Pancreas (tissue), 10 donors: ENCODE measurements at regions of chr2 and their contacts with region 1.

Region 1: DNA sequence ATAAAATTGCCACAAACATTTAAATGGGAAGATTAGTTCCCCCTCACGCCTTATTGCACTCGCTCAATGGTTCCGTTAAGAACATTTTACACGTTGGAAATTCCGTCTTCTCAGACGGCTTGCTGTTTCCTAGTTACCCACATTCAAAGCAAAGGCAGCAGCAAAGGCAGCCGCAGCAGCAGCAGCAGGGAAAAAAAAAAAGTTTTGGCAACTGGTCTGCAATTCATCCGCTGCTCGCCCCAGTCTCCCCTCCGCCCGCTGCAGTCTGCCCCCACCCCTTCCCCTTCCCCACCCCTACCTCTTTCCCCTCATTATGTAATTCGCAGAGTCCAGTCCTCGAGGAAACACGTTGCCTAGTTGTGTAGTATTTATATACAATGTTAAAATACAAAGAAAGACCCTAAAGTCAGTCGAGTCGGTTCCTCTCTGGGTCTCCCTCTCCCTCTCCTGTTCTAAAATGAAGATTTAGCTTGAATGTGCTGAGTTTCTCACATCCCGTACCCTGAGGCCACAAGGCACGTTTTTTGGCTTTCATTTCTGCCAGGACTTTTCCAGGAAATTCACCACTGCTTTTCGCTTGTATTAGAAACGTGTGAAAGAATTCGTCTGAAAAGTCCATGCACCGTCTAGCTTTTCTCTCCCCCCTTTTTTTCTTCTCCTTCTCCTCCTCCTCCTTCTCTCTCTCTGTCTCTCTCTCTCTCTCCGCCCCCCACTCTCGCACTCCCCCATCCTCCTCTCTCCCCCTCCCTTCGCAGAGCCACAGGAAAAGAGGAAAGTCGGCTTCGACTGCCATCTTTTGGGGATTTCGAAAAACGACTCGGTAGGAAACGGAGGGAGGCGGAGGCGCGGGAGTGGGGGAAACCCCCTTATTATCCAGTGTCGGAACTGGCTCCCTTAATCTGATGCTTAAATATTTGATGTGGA is 140.0 kb downstream of the MEIS1 start:
- DNase-seq: peak; percentile 67 to 84 (median 78)
- ATAC-seq: peak; percentile 38 to 56 (median 49)
- H3K4me3 ChIP-seq: peak overlapping the region; percentile 45 to 64 (median 52)
- H3K27ac ChIP-seq: peak overlapping the region; percentile 85 to 98 (median 94)
- H3K4me1 ChIP-seq: peaks cover 0 to 27% (median 18%) of the 10 kb centered on the region in 3 donors
- H3K27me3 ChIP-seq: no peaks in the 10 kb centered on the region
- CTCF ChIP-seq: peak in 1 of 4 donors; percentile 17

Region 2: DNA sequence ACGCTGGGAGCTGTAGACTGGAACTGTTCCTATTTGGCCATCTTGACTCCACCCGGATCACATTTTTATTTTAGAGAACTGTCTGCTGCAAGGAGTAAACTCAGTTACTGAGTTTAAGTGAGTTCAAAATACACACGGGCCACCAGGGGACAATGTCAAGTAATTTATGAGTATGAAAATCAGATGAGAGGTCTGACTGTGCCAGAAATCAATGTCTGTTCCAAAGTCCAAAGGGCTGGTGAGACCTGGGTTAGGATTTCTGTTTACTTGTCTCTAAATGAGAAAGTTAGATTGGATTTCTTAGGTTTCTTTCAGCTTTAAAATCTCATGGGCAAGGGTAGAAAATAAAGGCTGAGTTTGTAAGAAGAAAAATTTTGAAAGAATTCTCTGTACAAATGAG is 605.8 kb before region 1 on chr2:
- intact Hi-C with region 1: no loop called
- DNase-seq: peak in 3 of 6 donors; percentile 14 to 23 (median 19)
- ATAC-seq: peak; percentile 75 to 95 (median 91)
- H3K4me3 ChIP-seq: no peak overlapping the region
- H3K27ac ChIP-seq: no peak overlapping the region
- H3K4me1 ChIP-seq: peaks cover 5 to 10% (median 7%) of the 10 kb centered on the region in 3 donors
- H3K27me3 ChIP-seq: no peaks in the 10 kb centered on the region
- CTCF ChIP-seq: no peak

Region 3: GRCh38 chr2:66434679-66435548 is 140.0 kb before region 1 on chr2 and contains the start of gene MEIS1:
- intact Hi-C with region 1: loop called (anchors 2 to 10 kb)
- DNase-seq: peak; percentile 88 to 96 (median 96)
- ATAC-seq: peak; percentile 73 to 83 (median 78)
- H3K4me3 ChIP-seq: peak within 1 kb of the TSS; percentile 43 to 74 (median 66)
- H3K27ac ChIP-seq: peak within 1 kb of the TSS; percentile 87 to 99 (median 92)
- H3K4me1 ChIP-seq: peaks cover 0 to 5% (median 0%) of the 10 kb centered on the region in 3 donors
- H3K27me3 ChIP-seq: no peaks in the 10 kb centered on the region
- CTCF ChIP-seq: no peak
- total RNA-seq, gene MEIS1: 48.6 to 129 (median 60.3) TPM

Region 4: DNA sequence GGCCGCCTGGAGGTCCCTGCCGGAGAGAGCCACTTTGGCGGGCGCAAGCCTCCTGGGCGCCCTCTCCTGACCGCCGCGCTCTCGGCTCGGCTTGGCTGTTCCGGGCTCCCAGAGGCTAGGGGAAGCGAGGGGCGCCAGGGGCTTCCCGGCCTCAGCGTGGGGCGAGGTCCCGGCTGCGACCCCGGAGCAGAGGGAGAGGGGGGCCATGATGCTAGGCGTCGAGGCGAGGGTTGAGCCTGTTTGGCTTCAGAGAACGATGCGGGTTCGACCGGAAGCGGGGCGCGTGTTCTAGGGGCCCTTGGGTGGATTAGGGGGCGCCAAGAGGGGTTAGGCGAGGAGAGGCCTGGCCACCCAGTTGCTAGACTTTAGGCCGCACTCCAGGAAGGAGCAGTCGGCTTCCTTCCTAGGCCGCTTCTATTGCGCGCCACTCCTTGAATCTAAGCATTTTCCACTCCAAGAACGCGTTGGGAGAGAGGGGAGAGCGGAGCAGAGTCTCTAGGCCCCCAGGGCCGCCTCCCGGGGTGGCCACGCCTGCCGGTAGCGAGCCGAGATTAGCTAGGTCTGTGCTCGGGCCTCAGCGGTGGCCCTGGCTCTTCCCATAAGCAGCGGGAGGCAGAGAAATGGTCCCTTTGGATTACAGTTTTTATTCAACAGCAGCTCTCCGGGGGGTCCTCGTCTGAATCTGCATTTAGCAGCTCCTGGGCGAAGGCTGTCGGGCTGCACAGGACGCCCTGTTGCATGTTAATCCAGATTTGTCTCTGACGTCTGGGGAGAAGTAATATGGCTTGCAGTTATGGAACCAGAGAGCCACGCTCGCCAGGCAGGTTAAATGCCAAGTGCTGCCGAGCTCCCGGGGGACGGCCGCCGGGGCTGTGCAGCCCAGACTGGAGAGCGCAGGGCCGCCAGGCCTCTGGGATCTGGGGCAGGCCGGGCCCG is 128.8 kb before region 1 on chr2:
- intact Hi-C with region 1: loop called in 1 of 3 experiments (anchors 10 kb)
- DNase-seq: peak; percentile 62 to 87 (median 65)
- ATAC-seq: peak; percentile 49 to 67 (median 60)
- H3K4me3 ChIP-seq: peak overlapping the region; percentile 29 to 74 (median 54)
- H3K27ac ChIP-seq: peak overlapping the region; percentile 75 to 99 (median 92)
- H3K4me1 ChIP-seq: peaks cover 23 to 33% (median 32%) of the 10 kb centered on the region in 3 donors
- H3K27me3 ChIP-seq: no peaks in the 10 kb centered on the region
- CTCF ChIP-seq: no peak

Region 5: DNA sequence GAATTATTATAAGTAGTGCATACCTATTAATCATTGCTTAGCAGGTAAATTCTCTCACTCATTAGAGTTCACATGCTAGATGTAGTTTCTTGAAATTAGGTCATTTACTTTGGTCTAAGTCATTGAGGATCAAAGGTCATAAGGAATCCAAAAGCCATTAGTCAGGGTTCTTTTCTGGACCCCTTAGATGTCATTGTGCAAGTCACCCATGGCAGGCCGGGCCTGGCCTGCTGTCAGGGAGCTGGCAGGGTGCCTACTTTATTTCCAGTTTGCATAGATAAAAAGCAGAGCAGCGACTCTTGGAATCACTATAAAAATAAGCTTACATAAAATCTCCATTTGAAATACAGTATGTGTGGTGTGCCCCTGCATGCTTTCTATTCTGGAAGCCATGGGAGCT is 48.8 kb before region 1 on chr2:
- intact Hi-C with region 1: no loop called
- DNase-seq: peak in 1 of 6 donors; percentile 32
- ATAC-seq: peak in 3 of 4 donors; percentile 20 to 57 (median 27)
- H3K4me3 ChIP-seq: no peak overlapping the region
- H3K27ac ChIP-seq: no peak overlapping the region
- H3K4me1 ChIP-seq: peaks cover 14 to 37% (median 33%) of the 10 kb centered on the region in 3 donors
- H3K27me3 ChIP-seq: no peaks in the 10 kb centered on the region
- CTCF ChIP-seq: no peak

Region 6: GRCh38 chr2:67037655-67038054 is 462.7 kb after region 1 on chr2:
- intact Hi-C with region 1: loop called in 1 of 3 experiments (anchors 5 kb)
- DNase-seq: peak in 4 of 6 donors; percentile 53 to 89 (median 86)
- ATAC-seq: peak; percentile 67 to 80 (median 72)
- H3K4me3 ChIP-seq: no peak overlapping the region
- H3K27ac ChIP-seq: peak overlapping the region; percentile 69 to 88 (median 87)
- H3K4me1 ChIP-seq: peaks cover 34 to 77% (median 74%) of the 10 kb centered on the region in 3 donors
- H3K27me3 ChIP-seq: no peaks in the 10 kb centered on the region
- CTCF ChIP-seq: no peak